Common myeloid progenitor, CD34-positive (primary cell): ENCODE measurements at regions of chr17 and their contacts with region 1.

Region 1: DNA sequence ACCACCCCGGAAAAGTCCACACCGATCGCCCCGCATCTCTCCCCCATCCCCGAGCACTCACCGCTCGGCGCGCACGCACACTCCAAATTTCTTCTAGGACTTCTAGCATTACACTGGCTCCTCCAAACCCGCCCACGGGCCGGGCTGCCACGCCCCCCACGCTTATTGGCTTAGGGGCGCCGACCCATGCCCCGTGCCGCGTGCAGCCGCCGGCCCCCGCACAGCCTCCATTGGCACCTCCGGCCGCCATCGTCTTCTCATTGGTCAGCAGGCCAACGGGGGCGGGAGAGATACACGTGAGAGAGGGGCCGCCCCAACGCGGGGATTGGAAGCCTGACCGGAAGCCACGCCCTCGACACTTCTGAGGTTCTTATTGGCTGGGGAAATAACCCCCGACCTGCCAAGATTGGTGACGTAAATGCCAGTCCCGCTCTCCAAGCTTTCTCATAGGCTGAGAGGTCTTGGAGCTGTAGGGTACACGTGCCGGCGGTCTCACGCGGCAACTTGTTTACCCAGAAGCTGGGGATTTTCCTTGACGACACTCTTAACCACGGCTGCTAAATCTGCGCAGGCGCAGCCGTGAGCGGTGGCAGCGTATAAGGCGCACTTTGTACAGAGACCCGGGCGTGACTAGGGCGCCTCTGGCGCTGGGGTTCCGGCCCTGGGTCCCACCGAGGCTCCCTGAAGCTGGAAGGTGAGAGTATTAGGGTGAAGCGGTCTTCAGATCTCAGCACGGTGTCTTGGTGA is 4.2 kb upstream of the PER1 start:
- DNase-seq: peak; percentile 100
- H3K4me3 ChIP-seq: peak overlapping the region; percentile 61 to 88 (median 73)
- H3K27ac ChIP-seq: peak overlapping the region; percentile 91 to 96
- H3K4me1 ChIP-seq: peaks cover 15 to 68% (median 65%) of the 10 kb centered on the region in 4 experiments
- H3K27me3 ChIP-seq: no peaks in the 10 kb centered on the region

Region 2: GRCh38 chr17:8143764-8144719 is 12.4 kb before region 1 on chr17:
- CTCF ChIA-PET with region 1: interaction called, 292 read pairs
- POLR2A ChIA-PET with region 1: interaction called, 24 read pairs
- DNase-seq: peak in 1 of 3 donors; percentile 57
- H3K4me3 ChIP-seq: no peak overlapping the region
- H3K27ac ChIP-seq: no peak overlapping the region
- H3K4me1 ChIP-seq: peaks cover 0 to 11% (median 6%) of the 10 kb centered on the region in 4 experiments
- H3K27me3 ChIP-seq: no peaks in the 10 kb centered on the region